ENCODE measurements at regions of chr17 and their contacts with region 1.

Region 1: DNA sequence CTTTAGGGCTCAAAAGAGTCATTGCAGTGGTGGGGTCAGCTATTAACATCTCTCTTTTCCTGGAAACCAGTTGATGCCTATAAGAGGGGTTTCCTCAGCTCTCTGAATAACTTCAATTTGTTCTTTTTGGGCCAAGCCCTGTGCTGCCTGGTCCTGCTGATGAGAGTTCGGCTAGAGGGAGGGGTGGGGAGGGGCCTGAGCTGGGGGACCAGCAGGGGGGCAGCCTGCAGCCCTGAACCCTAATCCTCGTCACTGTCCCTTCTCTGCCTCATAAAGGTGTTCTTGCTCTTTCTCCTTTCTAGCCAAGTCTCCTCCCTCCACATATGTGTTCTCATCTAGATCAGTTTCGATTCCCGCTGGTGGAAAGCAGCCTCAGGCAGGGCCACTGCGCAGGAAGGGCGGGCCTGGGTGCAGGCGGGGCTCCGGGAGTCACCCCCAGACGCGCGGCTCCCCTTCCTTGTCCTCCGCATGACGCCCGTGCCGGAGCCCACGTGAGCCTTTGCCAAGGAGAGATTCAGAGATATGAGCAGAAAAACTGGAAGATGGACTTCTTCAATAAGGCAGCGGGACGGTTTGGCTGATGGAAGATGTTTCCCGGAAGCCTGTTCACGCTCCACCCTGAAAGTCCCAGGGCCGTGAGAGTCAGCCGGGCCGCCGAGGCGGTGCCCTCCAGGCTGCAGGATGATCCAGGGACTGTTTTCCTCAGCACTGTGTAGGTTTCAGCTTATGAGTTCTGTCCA is 15.0 kb upstream of the RHOT1 start:
- DNase-seq: peak; percentile 86
- ATAC-seq: peak; percentile 100
- H3K4me3 Mint-ChIP-seq: peak overlapping the region; percentile 96
- H3K27ac Mint-ChIP-seq: peak overlapping the region; percentile 100
- H3K4me1 Mint-ChIP-seq: peaks cover 26% of the 10 kb centered on the region
- H3K27me3 Mint-ChIP-seq: peaks cover 2% of the 10 kb centered on the region

Region 2: DNA sequence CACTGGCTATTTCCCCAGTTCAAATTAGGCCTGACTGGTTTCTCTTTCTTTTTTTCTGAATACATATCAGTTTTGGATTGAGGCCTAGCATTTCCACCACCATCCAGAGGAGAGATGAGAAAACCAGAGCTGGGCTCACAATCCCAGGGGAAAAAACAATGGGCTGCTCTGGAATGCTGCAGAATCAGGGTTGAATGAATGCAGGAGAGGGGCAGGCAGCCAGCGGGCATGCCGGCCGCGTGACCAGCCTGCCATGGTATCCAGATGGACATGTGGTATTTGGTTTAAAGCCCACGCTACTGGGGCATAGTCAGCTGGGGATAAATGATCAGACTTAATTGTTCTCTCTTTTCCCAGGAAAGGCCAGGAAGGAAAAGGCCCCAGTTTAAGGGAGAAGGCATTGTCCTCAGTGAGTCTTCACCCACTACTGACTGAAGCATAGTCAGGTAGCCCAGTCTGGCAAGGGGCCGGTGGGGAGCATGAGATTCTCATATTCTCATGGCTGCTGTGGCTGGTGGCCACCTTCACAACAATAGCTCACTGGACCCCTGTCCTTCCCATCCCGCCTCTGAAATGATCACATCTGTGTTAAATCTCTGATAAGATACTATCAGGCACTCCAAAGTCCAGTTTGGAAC is 23.7 kb before region 1 on chr17:
- POLR2A ChIA-PET with region 1: interaction called, 34 read pairs
- DNase-seq: no peak
- ATAC-seq: peak; percentile 15
- H3K4me3 Mint-ChIP-seq: peak overlapping the region; percentile 78
- H3K27ac Mint-ChIP-seq: peak overlapping the region; percentile 94
- H3K4me1 Mint-ChIP-seq: peaks cover 38% of the 10 kb centered on the region
- H3K27me3 Mint-ChIP-seq: no peaks in the 10 kb centered on the region